Heart right ventricle (tissue), 16 donors: ENCODE measurements at regions of chr10 and their contacts with region 1.

Region 1: DNA sequence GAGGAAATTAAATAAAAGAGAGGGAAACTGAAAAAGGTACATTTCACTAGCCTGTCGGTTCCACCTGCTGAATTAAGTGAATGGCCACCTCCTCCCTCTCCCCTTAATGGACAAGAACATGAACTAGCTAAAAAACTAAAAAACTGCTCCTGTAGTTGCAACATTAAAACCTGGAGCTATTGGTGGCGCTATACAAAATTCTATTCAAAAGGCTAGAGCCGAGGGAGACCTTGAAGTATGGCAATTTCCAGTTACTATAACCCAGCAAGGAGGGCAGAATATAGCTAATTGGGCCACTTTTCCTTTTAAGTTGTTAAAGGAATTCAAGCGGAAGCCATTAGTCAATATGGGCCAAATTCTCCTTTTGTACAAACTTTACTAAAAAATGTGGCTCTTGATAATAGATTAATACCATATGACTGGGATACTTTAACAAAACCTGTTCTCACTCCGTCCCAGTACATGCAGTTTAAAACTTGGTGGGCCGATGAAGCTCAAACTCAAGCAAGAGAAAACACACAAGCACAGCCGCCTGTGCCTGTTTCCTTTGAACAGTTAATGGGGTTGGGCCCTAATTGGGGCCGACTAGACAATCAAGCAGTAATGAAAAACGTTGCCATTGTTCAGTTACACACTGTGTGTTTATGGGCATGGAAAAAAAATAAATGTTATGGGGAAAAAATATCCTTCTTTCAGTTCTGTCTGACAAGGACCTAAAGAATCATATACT is 6.5 kb upstream of the CHST3 start:
- DNase-seq: no peak
- ATAC-seq: no peak
- H3K4me3 ChIP-seq: no peak overlapping the region
- H3K27ac ChIP-seq: no peak overlapping the region
- H3K4me1 ChIP-seq: peaks cover 2 to 12% (median 8%) of the 10 kb centered on the region in 9 donors
- H3K27me3 ChIP-seq: no peaks in the 10 kb centered on the region
- CTCF ChIP-seq: peak in 1 of 9 donors; percentile 8

Region 2: DNA sequence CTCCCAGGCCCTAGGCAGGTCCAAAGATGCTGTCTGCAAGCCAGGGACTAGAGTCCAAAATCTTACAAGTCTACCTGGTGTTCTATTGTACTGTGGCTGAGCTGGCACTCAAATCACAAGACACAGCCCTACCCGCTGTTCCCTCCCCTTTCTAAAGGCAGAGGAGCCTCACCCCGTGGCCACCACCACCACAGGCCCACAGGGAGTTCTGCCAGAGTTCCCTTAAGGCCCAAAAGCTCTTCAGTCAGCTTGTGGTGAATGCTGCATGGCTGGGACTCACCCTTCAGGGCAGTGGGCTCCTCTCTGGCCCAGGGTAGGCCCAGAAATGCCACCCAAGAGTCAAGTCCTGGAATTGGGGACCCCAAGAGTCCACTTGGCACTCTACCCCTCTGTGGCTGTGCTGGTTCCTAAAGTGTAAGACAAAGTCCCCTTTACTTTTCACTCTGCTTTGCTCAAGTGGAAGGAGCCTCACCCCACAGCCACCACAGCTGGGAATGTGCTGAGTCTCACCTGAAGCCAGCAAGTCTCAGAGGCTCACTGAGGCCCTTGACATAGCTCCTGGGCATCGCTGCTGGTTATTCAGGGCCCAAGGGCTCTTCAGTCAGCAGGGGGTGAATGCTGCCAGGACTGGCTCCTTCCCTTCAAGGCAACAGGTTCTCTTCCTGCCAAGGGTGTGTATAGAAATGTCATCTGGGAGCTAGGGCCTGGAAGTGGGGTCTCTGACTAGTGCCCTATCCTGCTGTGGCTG is 57.9 kb before region 1 on chr10:
- intact Hi-C with region 1: loop called in 2 of 10 experiments (anchors 5 kb)
- DNase-seq: no peak
- ATAC-seq: peak in 1 of 8 donors; percentile 7
- H3K4me3 ChIP-seq: no peak overlapping the region
- H3K27ac ChIP-seq: no peak overlapping the region
- H3K4me1 ChIP-seq: peaks cover 0 to 14% (median 10%) of the 10 kb centered on the region in 9 donors
- H3K27me3 ChIP-seq: no peaks in the 10 kb centered on the region
- CTCF ChIP-seq: no peak

Region 3: GRCh38 chr10:71909399-71910083 is 48.2 kb before region 1 on chr10:
- intact Hi-C with region 1: loop called in 1 of 10 experiments (anchors 5 kb)
- DNase-seq: no peak
- ATAC-seq: no peak
- H3K4me3 ChIP-seq: no peak overlapping the region
- H3K27ac ChIP-seq: no peak overlapping the region
- H3K4me1 ChIP-seq: peaks cover 0 to 22% (median 5%) of the 10 kb centered on the region in 9 donors
- H3K27me3 ChIP-seq: no peaks in the 10 kb centered on the region
- CTCF ChIP-seq: no peak

Region 4: GRCh38 chr10:72048450-72049124 is 90.9 kb after region 1 on chr10:
- intact Hi-C with region 1: loop called (anchors 1 to 5 kb)
- DNase-seq: peak; percentile 94
- ATAC-seq: peak; percentile 58 to 91 (median 84)
- H3K4me3 ChIP-seq: no peak overlapping the region
- H3K27ac ChIP-seq: no peak overlapping the region
- H3K4me1 ChIP-seq: peaks cover 0 to 25% (median 10%) of the 10 kb centered on the region in 9 donors
- H3K27me3 ChIP-seq: no peaks in the 10 kb centered on the region
- CTCF ChIP-seq: peak; percentile 99 to 100 (median 100)

Region 5: GRCh38 chr10:72337020-72337629 is 379.4 kb after region 1 on chr10:
- intact Hi-C with region 1: loop called in 7 of 10 experiments (anchors 5 to 10 kb)
- DNase-seq: peak; percentile 88 to 90
- ATAC-seq: peak; percentile 30 to 51 (median 43)
- H3K4me3 ChIP-seq: no peak overlapping the region
- H3K27ac ChIP-seq: peak overlapping the region; percentile 46 to 97 (median 90)
- H3K4me1 ChIP-seq: peaks cover 34 to 70% (median 57%) of the 10 kb centered on the region in 9 donors
- H3K27me3 ChIP-seq: no peaks in the 10 kb centered on the region
- CTCF ChIP-seq: peak; percentile 95 to 99 (median 96)